ENCODE measurements at regions of chr14 and their contacts with region 1.

Region 1: DNA sequence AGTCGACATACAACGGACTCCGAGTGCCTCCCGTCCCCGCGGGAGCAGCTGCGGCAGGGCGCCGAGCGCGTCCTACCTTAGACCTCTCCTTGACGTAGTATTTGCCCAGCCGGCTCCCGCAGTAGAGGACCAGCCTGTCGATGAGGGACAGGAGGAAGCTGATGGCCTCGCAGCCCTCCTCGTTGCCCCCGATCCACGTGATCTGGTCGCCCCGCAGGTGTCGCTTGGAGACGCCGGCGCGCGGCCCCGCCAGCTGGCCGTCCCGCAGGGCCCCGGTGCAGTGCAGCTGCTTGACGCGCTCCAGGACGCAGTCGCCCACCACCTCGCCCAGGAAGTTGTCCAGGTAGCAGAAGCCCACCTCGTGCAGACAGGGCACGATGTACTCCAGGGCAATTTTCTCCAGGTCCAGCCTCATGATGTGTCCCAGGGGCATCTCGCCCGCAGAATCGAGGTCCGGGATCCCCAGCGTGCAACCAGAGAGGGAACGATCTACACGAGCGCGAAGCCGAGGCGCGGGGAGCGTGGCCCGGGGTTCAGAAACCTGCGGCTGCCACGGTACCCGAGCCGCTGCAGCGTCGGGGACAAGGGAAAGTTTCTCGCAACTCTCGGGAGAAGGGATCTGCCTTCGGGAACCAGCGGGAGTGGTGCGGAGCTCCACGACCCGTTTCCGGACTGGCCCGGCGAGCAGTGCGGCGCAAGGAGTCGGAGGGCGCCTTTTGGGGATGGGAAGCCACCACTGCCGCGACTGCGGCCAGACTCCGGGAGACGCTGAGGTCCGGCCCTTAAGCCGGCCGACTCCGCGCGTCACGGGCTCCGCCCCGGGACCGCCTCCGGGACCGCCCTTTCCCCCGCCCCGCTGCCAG is at the start of gene EGLN3:
- DNase-seq: peak; percentile 71 to 90
- H3K4me3 ChIP-seq: peak within 1 kb of the TSS; percentile 82
- H3K27ac ChIP-seq: peak within 1 kb of the TSS; percentile 73
- H3K4me1 ChIP-seq: peaks cover 27% of the 10 kb centered on the region
- H3K27me3 ChIP-seq: no peaks in the 10 kb centered on the region
- CTCF ChIP-seq: no peak
- total RNA-seq, gene EGLN3: 22.6 and 23.6 TPM in 2 replicates

Region 2: DNA sequence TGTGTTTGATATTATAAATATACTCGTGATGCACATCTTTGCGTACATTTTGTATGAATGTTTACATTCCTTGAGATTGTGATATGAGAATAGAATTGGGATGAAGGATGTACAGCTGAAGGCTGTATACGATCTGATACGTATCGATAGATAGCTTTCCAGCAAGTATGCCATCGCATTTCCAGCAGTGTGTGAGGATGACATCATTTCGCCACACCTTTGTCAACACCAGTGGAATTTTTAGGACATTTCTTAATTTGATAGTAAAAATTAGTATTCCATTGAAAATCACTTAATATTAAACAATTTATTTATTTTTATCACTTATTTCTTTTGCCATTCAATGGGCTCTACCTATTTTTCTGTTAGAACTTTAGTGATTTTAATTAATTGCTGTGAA is 808.9 kb before region 1 on chr14:
- CTCF ChIA-PET with region 1: no interaction called
- POLR2A ChIA-PET with region 1: no interaction called
- intact Hi-C with region 1: no loop called
- DNase-seq: no peak
- H3K4me3 ChIP-seq: no peak overlapping the region
- H3K27ac ChIP-seq: no peak overlapping the region
- H3K4me1 ChIP-seq: no peaks in the 10 kb centered on the region
- H3K27me3 ChIP-seq: no peaks in the 10 kb centered on the region
- CTCF ChIP-seq: no peak

Region 3: GRCh38 chr14:33996462-33996861 is 45.9 kb after region 1 on chr14:
- CTCF ChIA-PET with region 1: no interaction called
- POLR2A ChIA-PET with region 1: interaction called, 3 read pairs
- intact Hi-C with region 1: loop called (anchors 5 kb)
- DNase-seq: no peak
- H3K4me3 ChIP-seq: no peak overlapping the region
- H3K27ac ChIP-seq: no peak overlapping the region
- H3K4me1 ChIP-seq: peaks cover 18% of the 10 kb centered on the region
- H3K27me3 ChIP-seq: no peaks in the 10 kb centered on the region
- CTCF ChIP-seq: no peak

Region 4: GRCh38 chr14:34035177-34035933 is 84.8 kb after region 1 on chr14:
- CTCF ChIA-PET with region 1: no interaction called
- POLR2A ChIA-PET with region 1: no interaction called
- intact Hi-C with region 1: loop called (anchors 5 kb)
- DNase-seq: peak in 1 of 2 experiments; percentile 47
- H3K4me3 ChIP-seq: no peak overlapping the region
- H3K27ac ChIP-seq: no peak overlapping the region
- H3K4me1 ChIP-seq: peaks cover 10% of the 10 kb centered on the region; the same call in 1 of the 2 replicates
- H3K27me3 ChIP-seq: no peaks in the 10 kb centered on the region
- CTCF ChIP-seq: no peak

Region 5: DNA sequence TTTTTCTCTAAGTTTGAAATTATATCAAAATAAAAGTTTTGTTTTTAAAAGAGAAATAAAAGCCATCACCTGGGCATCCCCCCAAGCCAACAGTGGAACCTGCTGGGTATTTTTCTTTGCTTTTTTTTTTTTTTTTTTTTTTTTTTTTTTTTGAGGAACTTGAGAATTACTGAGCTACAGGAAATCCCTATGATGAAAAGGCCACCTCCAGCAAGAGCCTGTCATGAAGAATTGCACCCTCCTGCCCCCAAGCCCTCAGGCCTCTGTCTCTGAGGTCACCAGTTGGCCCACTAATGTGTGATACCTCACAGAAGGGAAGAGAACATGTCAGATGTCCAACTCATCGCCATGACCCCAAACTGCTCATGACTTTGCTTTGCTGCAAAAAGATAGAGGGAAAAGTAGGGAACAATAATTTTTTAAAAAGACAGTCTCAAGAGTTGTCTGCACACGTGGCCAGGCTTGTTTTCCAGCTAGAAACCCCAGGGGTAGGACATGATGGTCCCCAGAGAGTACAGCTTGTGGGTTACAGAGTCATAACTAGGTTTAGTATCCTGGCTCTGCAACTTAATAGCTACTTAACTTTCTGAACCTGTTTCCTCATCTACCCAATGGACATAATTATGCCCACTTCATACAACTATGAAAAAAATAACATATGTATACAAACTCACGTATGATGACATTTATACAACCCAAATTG is 124.6 kb after region 1 on chr14:
- CTCF ChIA-PET with region 1: no interaction called
- POLR2A ChIA-PET with region 1: interaction called, 15 read pairs
- intact Hi-C with region 1: no loop called
- DNase-seq: no peak
- H3K4me3 ChIP-seq: no peak overlapping the region
- H3K27ac ChIP-seq: no peak overlapping the region
- H3K4me1 ChIP-seq: peaks cover 14% of the 10 kb centered on the region
- H3K27me3 ChIP-seq: no peaks in the 10 kb centered on the region
- CTCF ChIP-seq: no peak